ENCODE measurements at regions of chr10 and their contacts with region 1.

Region 1: GRCh38 chr10:110547139-110547761 is 20.2 kb upstream of the SMC3 start:
- DNase-seq: no peak
- ATAC-seq: peak; percentile 77
- H3K4me3 Mint-ChIP-seq: no peak overlapping the region
- H3K27ac Mint-ChIP-seq: no peak overlapping the region
- H3K4me1 Mint-ChIP-seq: peaks cover 10% of the 10 kb centered on the region
- H3K27me3 Mint-ChIP-seq: peaks cover 21% of the 10 kb centered on the region
- CTCF ChIP-seq: peak; percentile 91

Region 2: GRCh38 chr10:110244550-110244949 is 302.7 kb before region 1 on chr10:
- CTCF ChIA-PET with region 1: no interaction called
- POLR2A ChIA-PET with region 1: no interaction called
- intact Hi-C with region 1: no loop called
- DNase-seq: no peak
- ATAC-seq: no peak
- H3K4me3 Mint-ChIP-seq: no peak overlapping the region
- H3K27ac Mint-ChIP-seq: no peak overlapping the region
- H3K4me1 Mint-ChIP-seq: peaks cover 21% of the 10 kb centered on the region
- H3K27me3 Mint-ChIP-seq: peaks cover 14% of the 10 kb centered on the region
- CTCF ChIP-seq: no peak

Region 3: DNA sequence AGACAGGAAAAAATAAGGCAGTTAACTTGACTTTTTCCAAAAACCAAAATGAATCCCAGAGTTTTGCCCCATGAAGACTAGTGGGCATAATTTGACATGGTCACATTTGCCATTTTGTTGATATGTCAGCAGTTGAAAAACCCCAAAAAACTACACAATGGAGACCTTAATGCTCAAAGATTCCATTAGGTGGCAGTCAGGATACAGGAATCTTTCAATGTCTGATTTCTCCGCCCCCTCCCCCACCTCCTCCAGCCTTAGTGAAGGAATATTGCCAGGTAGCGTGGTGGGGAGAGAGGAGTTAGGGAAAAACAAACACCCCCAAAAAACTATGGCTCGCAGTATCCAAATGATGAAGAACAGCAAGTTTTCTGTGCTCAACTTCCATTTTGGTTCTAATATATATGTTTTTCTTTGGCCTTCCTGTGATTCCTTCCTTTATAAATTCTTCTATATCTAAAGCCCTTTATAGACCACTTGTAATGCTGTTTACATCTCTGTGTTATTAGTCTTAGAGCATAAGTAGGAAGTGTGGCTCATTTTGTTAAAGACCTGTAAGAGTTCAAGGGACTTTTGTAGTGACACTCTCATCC is 235.8 kb before region 1 on chr10:
- CTCF ChIA-PET with region 1: interaction called, 55 read pairs
- POLR2A ChIA-PET with region 1: interaction called, 4 read pairs
- intact Hi-C with region 1: loop called (anchors 1 kb)
- DNase-seq: peak; percentile 56
- ATAC-seq: peak; percentile 67
- H3K4me3 Mint-ChIP-seq: no peak overlapping the region
- H3K27ac Mint-ChIP-seq: no peak overlapping the region
- H3K4me1 Mint-ChIP-seq: peaks cover 20% of the 10 kb centered on the region
- H3K27me3 Mint-ChIP-seq: peaks cover 6% of the 10 kb centered on the region
- CTCF ChIP-seq: peak; percentile 64

Region 4: GRCh38 chr10:110378533-110379108 is 168.6 kb before region 1 on chr10:
- CTCF ChIA-PET with region 1: no interaction called
- POLR2A ChIA-PET with region 1: no interaction called
- intact Hi-C with region 1: no loop called
- DNase-seq: no peak
- ATAC-seq: no peak
- H3K4me3 Mint-ChIP-seq: no peak overlapping the region
- H3K27ac Mint-ChIP-seq: no peak overlapping the region
- H3K4me1 Mint-ChIP-seq: peaks cover 14% of the 10 kb centered on the region
- H3K27me3 Mint-ChIP-seq: peaks cover 1% of the 10 kb centered on the region
- CTCF ChIP-seq: no peak

Region 5: DNA sequence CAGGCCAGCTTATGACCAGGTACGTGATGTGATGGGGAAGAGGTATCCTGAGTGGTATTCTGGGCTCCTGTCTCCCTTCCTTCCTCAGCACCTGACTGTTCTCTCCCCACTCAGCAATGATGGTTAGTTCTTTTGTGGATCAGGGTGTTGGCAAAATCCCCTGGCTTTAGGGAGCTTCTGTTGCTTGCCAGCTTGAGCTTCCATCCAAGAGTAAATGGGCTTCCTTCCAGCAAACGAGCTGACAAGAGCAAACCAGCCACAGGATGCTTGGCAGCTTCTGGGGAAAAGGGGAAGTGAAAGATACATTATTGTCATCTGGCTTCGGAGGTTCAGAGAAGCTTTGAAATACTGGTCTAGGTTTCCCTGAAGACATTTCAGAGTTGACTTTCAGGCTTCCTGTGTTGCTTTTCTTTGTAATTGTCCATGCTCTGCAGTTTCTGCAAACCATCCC is 44.4 kb before region 1 on chr10:
- CTCF ChIA-PET with region 1: interaction called, 26 read pairs
- POLR2A ChIA-PET with region 1: interaction called, 6 read pairs
- intact Hi-C with region 1: no loop called
- DNase-seq: no peak
- ATAC-seq: no peak
- H3K4me3 Mint-ChIP-seq: peak overlapping the region; percentile 99
- H3K27ac Mint-ChIP-seq: peak overlapping the region; percentile 91
- H3K4me1 Mint-ChIP-seq: peaks cover 76% of the 10 kb centered on the region
- H3K27me3 Mint-ChIP-seq: no peaks in the 10 kb centered on the region
- CTCF ChIP-seq: no peak

Region 6: DNA sequence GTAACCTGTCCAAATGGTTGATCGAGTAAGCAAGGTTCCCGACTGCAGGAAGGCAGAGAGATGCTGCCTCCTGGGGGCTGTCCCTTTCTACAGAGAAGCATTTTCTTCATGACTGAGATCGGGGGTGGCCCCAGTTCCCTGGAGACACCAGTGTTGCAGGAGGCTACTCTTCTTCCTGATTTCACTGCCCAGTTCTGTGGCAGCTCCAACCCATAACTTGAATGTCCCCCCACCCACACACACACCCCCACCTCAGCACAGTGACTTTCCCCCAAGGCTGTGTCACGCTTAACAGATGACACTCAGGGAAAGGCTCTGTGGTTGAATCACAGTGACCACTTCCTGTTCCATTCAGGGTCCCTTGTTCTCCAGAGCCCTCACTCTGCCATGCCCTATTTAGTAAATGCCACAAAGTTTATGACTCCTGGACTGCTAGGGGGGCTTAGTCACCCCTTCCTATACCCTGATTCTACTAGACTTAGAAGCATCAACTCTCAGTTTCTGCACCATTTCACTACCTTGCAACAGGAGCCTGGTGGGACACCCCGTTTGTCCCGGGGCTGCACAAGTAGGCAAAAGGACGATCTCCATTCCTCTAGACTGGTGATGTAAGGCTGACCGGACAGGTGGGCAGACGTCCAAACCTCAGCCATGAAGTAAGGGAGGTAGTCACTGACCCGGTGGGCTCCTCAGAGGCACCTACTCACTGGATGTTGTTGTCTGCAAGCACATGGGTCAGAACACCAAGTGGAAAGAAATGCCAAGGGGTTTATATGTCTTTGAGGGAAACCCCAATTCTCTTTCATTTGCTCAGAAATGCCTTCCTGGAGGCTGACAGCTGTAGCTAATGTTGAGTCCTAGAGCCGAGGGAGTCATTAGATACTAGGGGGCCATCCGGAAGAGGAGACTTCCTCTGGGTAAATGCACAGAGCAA is 11.0 kb before region 1 on chr10:
- CTCF ChIA-PET with region 1: interaction called, 20 read pairs
- POLR2A ChIA-PET with region 1: no interaction called
- intact Hi-C with region 1: no loop called
- DNase-seq: peak; percentile 95
- ATAC-seq: peak; percentile 92
- H3K4me3 Mint-ChIP-seq: peak overlapping the region; percentile 24
- H3K27ac Mint-ChIP-seq: peak overlapping the region; percentile 90
- H3K4me1 Mint-ChIP-seq: peaks cover 46% of the 10 kb centered on the region
- H3K27me3 Mint-ChIP-seq: no peaks in the 10 kb centered on the region
- CTCF ChIP-seq: no peak